ENCODE measurements at regions of chr6 and their contacts with region 1.

Region 1: GRCh38 chr6:29847871-29848630 is 20.4 kb downstream of the HLA-G start:
- DNase-seq: no peak
- H3K4me3 ChIP-seq: no peak overlapping the region
- CTCF ChIP-seq: peak; percentile 91

Region 2: DNA sequence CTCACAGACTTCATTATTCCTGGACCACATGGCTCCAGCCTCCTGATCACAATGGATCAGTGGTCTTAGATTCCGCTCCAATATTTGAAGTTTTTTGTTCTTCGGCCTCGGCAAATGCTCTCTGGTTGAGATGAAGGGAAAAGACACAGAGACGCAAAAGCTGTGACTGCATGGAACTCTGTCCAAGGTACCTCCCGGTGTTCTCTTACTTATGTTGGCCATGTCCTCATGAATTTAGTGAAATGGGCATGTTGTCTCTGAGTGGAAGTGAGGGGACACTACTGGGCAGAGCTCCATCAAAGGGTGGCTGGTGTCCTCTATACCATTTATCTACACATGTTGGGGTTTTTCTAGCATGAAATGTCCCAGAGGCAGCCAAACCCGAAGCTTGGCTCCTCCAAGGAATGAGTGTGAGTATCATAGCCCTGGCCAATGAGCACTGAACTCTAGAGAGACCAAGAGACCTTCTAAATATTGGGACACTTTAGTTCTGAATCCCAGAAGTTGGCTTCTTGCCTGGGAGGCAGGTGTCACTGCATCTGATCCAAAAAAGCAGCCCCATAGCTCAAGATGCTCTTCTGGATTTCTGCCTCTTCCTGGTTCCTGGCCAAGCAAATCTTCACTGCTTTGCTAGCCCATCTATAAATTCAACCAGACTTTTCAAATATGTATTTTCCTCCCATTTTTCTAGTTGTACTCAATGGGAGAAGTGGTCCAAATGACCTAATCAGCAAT is 13.6 kb after region 1 on chr6:
- CTCF ChIA-PET with region 1: interaction called, 11 read pairs
- POLR2A ChIA-PET with region 1: no interaction called
- DNase-seq: no peak
- H3K4me3 ChIP-seq: no peak overlapping the region
- CTCF ChIP-seq: no peak

Region 3: DNA sequence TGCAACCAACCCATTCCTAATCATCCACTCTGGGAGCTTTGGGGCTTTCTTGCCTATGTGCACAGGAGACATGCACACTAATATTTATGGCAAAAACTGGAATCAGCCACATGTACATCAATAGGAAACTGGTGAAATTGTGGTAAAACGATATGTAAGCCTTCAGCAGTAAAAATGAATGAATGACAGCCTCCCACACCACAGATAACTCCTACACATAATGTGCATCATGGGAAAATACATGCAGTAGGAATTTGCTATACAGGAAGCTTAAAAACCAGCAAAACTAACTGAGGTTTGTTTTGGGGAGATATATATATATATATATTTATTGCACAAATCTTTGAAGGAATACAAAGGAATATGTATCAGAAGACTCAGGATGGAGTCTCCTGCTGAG is 27.2 kb after region 1 on chr6:
- CTCF ChIA-PET with region 1: no interaction called
- POLR2A ChIA-PET with region 1: no interaction called
- DNase-seq: no peak
- H3K4me3 ChIP-seq: no peak overlapping the region
- CTCF ChIP-seq: no peak

Region 4: GRCh38 chr6:29964887-29965562 is 117.0 kb after region 1 on chr6:
- CTCF ChIA-PET with region 1: interaction called, 26 read pairs
- POLR2A ChIA-PET with region 1: no interaction called
- DNase-seq: peak; percentile 56
- H3K4me3 ChIP-seq: peak overlapping the region; percentile 42
- CTCF ChIP-seq: no peak

Region 5: DNA sequence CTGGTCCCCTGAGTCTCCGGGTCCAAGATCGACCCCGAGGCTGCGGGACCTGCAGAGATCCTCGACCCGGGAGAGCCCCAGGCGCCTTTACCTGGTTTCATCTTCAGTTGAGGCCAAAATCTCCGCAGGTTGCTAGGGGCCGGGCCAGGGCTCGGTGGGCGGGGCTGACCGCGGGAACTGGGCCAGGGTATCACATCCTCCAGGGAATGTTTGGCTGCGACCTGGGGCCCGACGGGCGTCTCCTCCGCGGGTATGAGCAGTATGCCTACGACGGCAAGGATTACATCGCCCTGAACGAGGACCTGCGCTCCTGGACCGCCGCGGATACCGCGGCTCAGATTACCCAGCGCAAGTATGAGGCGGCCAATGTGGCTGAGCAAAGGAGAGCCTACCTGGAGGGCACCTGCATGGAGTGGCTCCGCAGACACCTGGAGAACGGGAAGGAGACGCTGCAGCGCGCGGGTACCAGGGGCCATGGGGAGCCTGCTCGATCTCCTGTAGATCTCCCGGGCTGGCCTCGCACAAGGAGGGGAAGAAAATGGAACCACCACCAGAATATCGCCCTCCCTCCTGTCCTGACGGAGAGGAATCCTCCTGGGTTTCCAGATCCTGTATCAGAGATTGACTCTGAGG is 159.2 kb after region 1 on chr6:
- CTCF ChIA-PET with region 1: interaction called, 67 read pairs
- POLR2A ChIA-PET with region 1: no interaction called
- DNase-seq: no peak
- H3K4me3 ChIP-seq: no peak overlapping the region; the same call in 1 of the 2 replicates
- CTCF ChIP-seq: no peak

Region 6: DNA sequence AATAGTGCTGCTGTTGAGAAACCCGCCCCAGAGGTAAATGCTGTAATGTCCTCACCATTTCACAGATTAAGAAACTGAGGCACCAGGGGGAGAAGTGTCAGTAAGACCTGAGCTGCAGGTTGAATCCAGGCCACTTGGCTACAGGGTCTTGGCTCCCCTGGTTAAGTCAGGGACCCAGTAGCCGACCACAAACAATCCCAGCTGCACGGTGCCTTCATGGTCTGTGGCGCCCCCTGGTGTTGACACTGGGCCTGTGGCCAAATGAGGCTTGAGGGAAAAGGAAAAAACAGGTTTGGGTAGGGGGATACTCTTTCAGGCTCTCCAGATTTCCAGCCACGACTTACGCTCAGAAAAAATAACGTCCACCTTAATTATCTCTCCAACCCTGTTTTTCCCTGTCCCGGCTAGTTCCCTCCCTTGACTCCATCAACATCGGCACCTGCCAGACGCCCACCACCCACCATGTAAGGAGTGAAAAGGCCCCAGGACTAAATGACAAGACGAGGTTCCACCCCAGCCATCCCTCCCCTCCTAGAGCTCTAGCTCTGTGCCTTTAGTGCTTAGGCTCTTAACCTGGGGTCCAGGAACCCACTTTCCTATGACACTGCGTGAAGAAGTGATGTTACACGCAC is 165.4 kb after region 1 on chr6:
- CTCF ChIA-PET with region 1: interaction called, 67 read pairs
- POLR2A ChIA-PET with region 1: no interaction called
- DNase-seq: no peak
- H3K4me3 ChIP-seq: no peak overlapping the region
- CTCF ChIP-seq: peak; percentile 58

Measured in AG04449 (cell line).